Activated CD4-positive, alpha-beta T cell treated with anti-CD3 and anti-CD28 coated beads, Interleukin-2, amount 10 ng/mL, durations not matched to agents 24 days and 14 days (primary cell): ENCODE measurements at regions of chr19 and their contacts with region 1.

Region 1: GRCh38 chr19:18636183-18636968 is 452 bp upstream of the KLHL26 start:
- DNase-seq: peak; percentile 100
- H3K4me3 Mint-ChIP-seq: peak overlapping the region; percentile 99
- H3K27ac Mint-ChIP-seq: peak overlapping the region; percentile 93
- H3K4me1 Mint-ChIP-seq: peaks cover 22% of the 10 kb centered on the region
- H3K27me3 Mint-ChIP-seq: peaks cover 9% of the 10 kb centered on the region

Region 2: GRCh38 chr19:18596752-18597157 is 39.6 kb before region 1 on chr19:
- intact Hi-C with region 1: loop called (anchors 5 kb)
- DNase-seq: peak; percentile 73
- H3K4me3 Mint-ChIP-seq: no peak overlapping the region
- H3K27ac Mint-ChIP-seq: no peak overlapping the region
- H3K4me1 Mint-ChIP-seq: peaks cover 5% of the 10 kb centered on the region
- H3K27me3 Mint-ChIP-seq: peaks cover 21% of the 10 kb centered on the region

Region 3: GRCh38 chr19:18932216-18932841 is 296.0 kb after region 1 on chr19:
- intact Hi-C with region 1: loop called (anchors 1 kb)
- DNase-seq: peak; percentile 92
- H3K4me3 Mint-ChIP-seq: peak overlapping the region; percentile 85
- H3K27ac Mint-ChIP-seq: peak overlapping the region; percentile 64
- H3K4me1 Mint-ChIP-seq: peaks cover 5% of the 10 kb centered on the region
- H3K27me3 Mint-ChIP-seq: peaks cover 13% of the 10 kb centered on the region